ENCODE measurements at regions of chr1 and their contacts with region 1.

Region 1: GRCh38 chr1:26154750-26155149 is 4.1 kb upstream of the FAM110D start:
- DNase-seq: no peak
- H3K4me3 ChIP-seq: no peak overlapping the region
- H3K27ac ChIP-seq: no peak overlapping the region
- H3K4me1 ChIP-seq: no peaks in the 10 kb centered on the region
- H3K27me3 ChIP-seq: peaks cover 21% of the 10 kb centered on the region
- CTCF ChIP-seq: no peak
- POLR2A ChIP-seq: no peak

Region 2: DNA sequence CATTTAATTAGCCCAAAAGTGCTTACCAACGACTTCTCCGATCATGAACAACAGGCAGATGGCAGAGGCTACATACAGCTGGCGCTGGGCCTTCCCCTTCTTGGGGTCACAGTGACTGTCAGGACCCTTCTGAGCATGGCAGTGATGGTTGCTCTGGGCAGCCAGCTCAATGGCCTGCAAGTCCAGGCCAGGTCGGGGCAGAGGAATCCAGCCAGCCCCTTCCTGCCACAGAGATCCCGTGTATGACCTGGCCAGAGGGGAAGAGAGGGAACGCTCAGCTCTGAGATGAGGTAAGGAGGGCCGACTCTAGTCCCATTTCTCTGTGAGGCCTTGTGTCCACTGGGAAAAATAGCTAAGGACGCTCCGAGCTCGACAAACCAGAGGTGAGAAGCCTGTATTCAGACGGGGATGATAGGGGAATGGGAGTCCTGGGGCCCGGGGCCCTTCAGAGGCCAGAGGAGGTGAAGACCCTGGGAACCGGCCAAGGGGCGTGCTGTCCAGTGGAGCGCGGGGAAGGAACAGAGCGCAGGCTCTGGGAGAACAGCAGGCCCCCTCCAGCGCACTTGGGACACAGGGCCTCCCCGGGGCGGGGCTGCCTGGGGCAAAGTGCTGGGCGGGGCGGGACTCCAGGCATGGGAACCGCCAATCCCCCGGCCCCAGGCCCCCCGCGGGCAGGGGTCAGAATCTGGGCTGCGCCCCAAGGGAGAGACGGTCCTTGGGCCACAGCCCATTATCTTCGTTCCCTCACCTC is 109.6 kb before region 1 on chr1:
- intact Hi-C with region 1: loop called in 1 of 2 experiments (anchors 5 kb)
- DNase-seq: no peak
- H3K4me3 ChIP-seq: peak overlapping the region in 1 of 4 donors; percentile 38
- H3K27ac ChIP-seq: no peak overlapping the region
- H3K4me1 ChIP-seq: peaks cover 0 to 14% of the 10 kb centered on the region in 2 donors
- H3K27me3 ChIP-seq: peaks cover 33% of the 10 kb centered on the region
- CTCF ChIP-seq: no peak
- POLR2A ChIP-seq: no peak